Caco-2 (cell line): ENCODE measurements at regions of chr12 and their contacts with region 1.

Region 1: DNA sequence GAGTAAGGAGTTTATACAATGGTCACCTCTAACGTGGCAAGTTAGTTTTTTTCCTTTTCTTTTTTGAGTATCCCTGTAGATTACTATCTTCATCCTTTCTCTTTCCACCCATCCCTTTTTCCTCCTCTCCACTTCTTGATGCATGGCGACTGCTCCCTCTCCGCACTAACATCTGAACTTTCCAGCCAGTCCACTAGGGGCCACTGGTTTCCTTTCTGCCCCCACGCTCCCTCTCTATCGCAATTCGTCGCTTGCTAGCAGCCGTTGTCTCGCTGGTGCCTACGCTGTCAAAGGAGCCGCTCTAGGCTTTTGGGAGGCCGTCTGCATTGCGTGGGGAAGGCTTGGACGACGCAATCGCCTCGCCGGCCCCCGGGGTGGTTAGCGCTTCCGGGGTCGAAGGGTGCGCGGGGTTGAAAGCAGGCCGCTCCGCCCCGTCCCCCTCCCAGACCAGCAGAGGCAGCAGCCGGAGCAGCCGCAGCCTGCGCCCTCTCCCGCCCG is at the start of gene PCBP2:
- DNase-seq: peak; percentile 98 to 99
- H3K4me3 ChIP-seq: peak within 1 kb of the TSS; percentile 89
- H3K4me3 Mint-ChIP-seq: peak within 1 kb of the TSS; percentile 79
- H3K27ac Mint-ChIP-seq: peak within 1 kb of the TSS; percentile 94
- H3K4me1 ChIP-seq: peaks cover 18% of the 10 kb centered on the region
- H3K4me1 Mint-ChIP-seq: peaks cover 26% of the 10 kb centered on the region
- H3K27me3 ChIP-seq: no peaks in the 10 kb centered on the region
- H3K27me3 Mint-ChIP-seq: no peaks in the 10 kb centered on the region
- CTCF ChIP-seq: peak; percentile 77 to 87
- total RNA-seq, gene PCBP2: 1,036 and 1,143 TPM in 2 replicates

Region 2: GRCh38 chr12:53441040-53441833 is 10.5 kb before region 1 on chr12 and contains the start of gene PRR13:
- CTCF ChIA-PET with region 1: interaction called, 4 read pairs
- POLR2A ChIA-PET with region 1: no interaction called
- intact Hi-C with region 1: loop called (anchors 1 kb)
- DNase-seq: peak; percentile 98 to 99
- H3K4me3 ChIP-seq: peak within 1 kb of the TSS; percentile 69
- H3K4me3 Mint-ChIP-seq: peak within 1 kb of the TSS; percentile 85
- H3K27ac Mint-ChIP-seq: peak within 1 kb of the TSS; percentile 98
- H3K4me1 ChIP-seq: peaks cover 30% of the 10 kb centered on the region
- H3K4me1 Mint-ChIP-seq: peaks cover 26% of the 10 kb centered on the region
- H3K27me3 ChIP-seq: no peaks in the 10 kb centered on the region
- H3K27me3 Mint-ChIP-seq: no peaks in the 10 kb centered on the region
- CTCF ChIP-seq: no peak
- total RNA-seq, gene PRR13: 395 and 400 TPM in 2 replicates

Region 3: GRCh38 chr12:53500776-53501614 is 49.3 kb after region 1 on chr12 and contains the start of gene TARBP2:
- CTCF ChIA-PET with region 1: interaction called, 3 read pairs
- POLR2A ChIA-PET with region 1: no interaction called
- intact Hi-C with region 1: loop called (anchors 2 kb)
- DNase-seq: peak; percentile 97 to 98
- H3K4me3 ChIP-seq: peak within 1 kb of the TSS; percentile 63
- H3K4me3 Mint-ChIP-seq: peak within 1 kb of the TSS; percentile 80
- H3K27ac Mint-ChIP-seq: peak within 1 kb of the TSS; percentile 86
- H3K4me1 ChIP-seq: peaks cover 16% of the 10 kb centered on the region
- H3K4me1 Mint-ChIP-seq: peaks cover 31% of the 10 kb centered on the region
- H3K27me3 ChIP-seq: no peaks in the 10 kb centered on the region
- H3K27me3 Mint-ChIP-seq: no peaks in the 10 kb centered on the region
- CTCF ChIP-seq: no peak
- total RNA-seq, gene TARBP2: 43.9 and 50.7 TPM in 2 replicates

Region 4: DNA sequence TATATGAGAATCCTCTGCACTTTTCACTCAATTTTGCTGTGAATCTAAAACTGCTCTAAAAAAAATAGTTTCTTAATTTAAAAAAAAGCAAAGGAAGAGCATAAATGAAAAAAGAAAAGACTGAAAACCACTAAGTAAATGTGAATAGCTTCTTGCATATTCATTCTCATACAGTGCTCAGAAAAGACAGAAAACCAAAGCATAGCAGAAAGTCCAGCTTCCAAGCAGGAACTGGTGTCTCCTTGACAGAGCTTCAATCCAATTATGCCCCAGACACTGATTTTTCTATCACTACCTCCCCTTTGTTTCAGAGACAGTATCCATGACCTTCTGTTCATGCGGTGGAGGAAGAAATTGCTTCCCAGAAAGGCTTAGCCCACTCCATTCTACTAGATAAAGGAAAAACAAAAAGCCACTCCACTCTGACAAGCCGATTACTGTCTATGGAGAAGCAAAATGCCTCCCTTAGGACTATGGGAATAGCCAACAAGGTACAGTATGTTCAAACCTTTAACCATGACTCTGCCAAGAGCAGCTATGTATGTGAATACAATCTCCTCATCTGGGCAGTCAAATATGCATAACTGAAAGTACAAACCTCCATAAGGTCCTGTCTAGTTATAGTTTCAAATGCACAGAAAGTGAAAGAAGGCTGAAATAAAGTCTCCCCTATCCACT is 133.9 kb after region 1 on chr12:
- CTCF ChIA-PET with region 1: no interaction called
- POLR2A ChIA-PET with region 1: no interaction called
- intact Hi-C with region 1: no loop called
- DNase-seq: no peak
- H3K4me3 ChIP-seq: no peak overlapping the region
- H3K4me3 Mint-ChIP-seq: no peak overlapping the region
- H3K27ac Mint-ChIP-seq: no peak overlapping the region
- H3K4me1 ChIP-seq: no peaks in the 10 kb centered on the region
- H3K4me1 Mint-ChIP-seq: no peaks in the 10 kb centered on the region
- H3K27me3 ChIP-seq: no peaks in the 10 kb centered on the region
- H3K27me3 Mint-ChIP-seq: no peaks in the 10 kb centered on the region
- CTCF ChIP-seq: no peak

Region 5: DNA sequence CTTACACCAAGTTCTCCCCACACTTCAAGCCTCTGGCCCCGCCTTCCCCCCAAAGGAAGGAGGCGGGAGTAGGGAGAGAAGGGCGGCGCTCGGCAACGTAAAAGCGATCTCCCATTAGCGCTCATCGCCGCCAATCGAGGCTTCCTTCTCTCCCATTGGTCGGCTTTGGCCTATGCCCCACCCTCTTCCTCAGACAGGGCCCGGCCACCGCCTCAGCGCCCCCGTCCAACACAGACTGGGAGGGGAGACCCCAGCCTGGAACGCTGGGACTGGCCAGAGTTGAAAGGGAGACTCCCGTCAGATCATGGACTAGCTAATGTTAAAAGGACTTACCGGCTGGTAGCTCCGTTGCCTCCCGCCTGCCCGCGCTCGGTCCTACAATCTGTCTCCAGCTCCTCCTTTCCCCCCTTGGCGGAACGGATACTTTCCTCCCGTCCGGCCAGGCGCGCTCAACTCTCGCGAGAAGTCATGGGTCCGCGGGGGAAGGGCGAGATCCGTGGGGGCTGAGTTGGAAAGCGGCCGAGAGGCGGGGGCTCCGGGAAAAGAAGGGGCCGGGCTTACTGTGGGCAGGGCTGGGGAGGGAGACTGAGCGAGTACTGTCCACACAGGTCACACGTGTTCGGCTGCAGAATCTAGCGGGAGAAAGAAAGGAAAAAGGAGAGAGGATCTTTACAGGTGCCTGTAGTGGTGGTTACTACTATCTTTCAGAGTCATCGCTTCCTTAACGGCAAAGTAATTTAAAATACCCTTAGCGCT is 174.4 kb after region 1 on chr12 and contains the start of gene ATF7:
- CTCF ChIA-PET with region 1: no interaction called
- POLR2A ChIA-PET with region 1: no interaction called
- intact Hi-C with region 1: no loop called
- DNase-seq: peak; percentile 98 to 99
- H3K4me3 ChIP-seq: peak within 1 kb of the TSS; percentile 73
- H3K4me3 Mint-ChIP-seq: peak within 1 kb of the TSS; percentile 100
- H3K27ac Mint-ChIP-seq: peak within 1 kb of the TSS; percentile 91
- H3K4me1 ChIP-seq: peaks cover 12% of the 10 kb centered on the region
- H3K4me1 Mint-ChIP-seq: peaks cover 27% of the 10 kb centered on the region
- H3K27me3 ChIP-seq: no peaks in the 10 kb centered on the region
- H3K27me3 Mint-ChIP-seq: no peaks in the 10 kb centered on the region
- CTCF ChIP-seq: no peak
- total RNA-seq, gene ATF7: 26.9 and 28.7 TPM in 2 replicates